ENCODE measurements at regions of chr9 and their contacts with region 1.

Region 1: DNA sequence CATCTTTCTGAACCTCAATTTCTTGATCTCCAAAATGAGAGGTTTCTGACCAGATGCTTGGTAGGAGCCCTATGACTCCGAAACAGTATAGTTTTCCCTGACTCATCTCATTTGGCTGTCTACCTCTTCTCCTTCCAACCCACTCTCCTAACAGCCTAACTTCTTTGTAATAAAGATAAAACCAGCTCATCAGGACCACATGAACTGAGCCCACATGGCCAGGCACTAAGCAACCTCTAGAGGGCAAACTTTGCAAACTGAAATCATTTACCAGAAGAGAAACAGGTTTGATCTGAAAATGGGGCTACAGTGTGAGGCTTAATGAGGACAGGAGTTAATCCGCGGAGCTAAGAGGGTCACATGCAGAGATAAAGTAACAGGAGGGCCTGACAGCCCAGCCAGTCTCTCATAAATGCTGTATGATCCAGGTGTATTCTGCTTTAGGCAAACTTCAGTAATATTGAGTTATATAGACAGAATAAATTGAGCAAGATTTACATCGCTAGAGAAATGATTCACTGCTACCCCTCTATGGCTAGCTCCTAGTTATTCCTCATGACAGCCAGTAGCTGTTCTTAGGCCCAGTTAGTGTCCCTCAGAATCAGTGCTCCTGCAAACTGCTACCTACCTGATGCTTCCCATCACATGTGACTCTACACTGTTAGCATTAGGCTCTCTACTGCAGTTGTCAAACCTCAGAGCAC is 64.6 kb downstream of the ABCA1 start:
- DNase-seq: peak; percentile 84
- H3K4me3 ChIP-seq: no peak overlapping the region
- H3K27ac ChIP-seq: peak overlapping the region; percentile 18
- H3K4me1 ChIP-seq: peaks cover 29% of the 10 kb centered on the region
- CTCF ChIP-seq: peak; percentile 99

Region 2: GRCh38 chr9:105414947-105415661 is 551.8 kb after region 1 on chr9:
- CTCF ChIA-PET with region 1: no interaction called
- POLR2A ChIA-PET with region 1: no interaction called
- intact Hi-C with region 1: loop called (anchors 2 kb)
- DNase-seq: peak; percentile 78
- H3K4me3 ChIP-seq: no peak overlapping the region
- H3K27ac ChIP-seq: no peak overlapping the region
- H3K4me1 ChIP-seq: peaks cover 4% of the 10 kb centered on the region
- CTCF ChIP-seq: peak; percentile 99